ENCODE measurements at regions of chr14 and their contacts with region 1.

Region 1: GRCh38 chr14:64503478-64504309 is at the start of gene ZBTB25:
- DNase-seq: peak; percentile 93
- ATAC-seq: peak; percentile 75
- H3K4me3 ChIP-seq: peak within 1 kb of the TSS; percentile 87
- H3K27ac ChIP-seq: peak within 1 kb of the TSS; percentile 100
- H3K4me1 ChIP-seq: peaks cover 14% of the 10 kb centered on the region
- H3K27me3 ChIP-seq: no peaks in the 10 kb centered on the region
- CTCF ChIP-seq: no peak
- POLR2A ChIP-seq: peak; percentile 72
- RAD21 ChIP-seq: no peak
- total RNA-seq, gene ZBTB25: 4.2 and 6.6 TPM in 2 replicates

Region 2: GRCh38 chr14:64636208-64636979 is 132.7 kb after region 1 on chr14:
- CTCF ChIA-PET with region 1: interaction called, 3 read pairs
- POLR2A ChIA-PET with region 1: interaction called, 9 read pairs
- dilution Hi-C with region 1: no loop called
- in situ Hi-C with region 1: no loop called
- intact Hi-C with region 1: loop called (anchors 2 kb)
- DNase-seq: peak; percentile 67
- ATAC-seq: peak; percentile 89
- H3K4me3 ChIP-seq: no peak overlapping the region
- H3K27ac ChIP-seq: peak overlapping the region; percentile 48
- H3K4me1 ChIP-seq: peaks cover 12% of the 10 kb centered on the region
- H3K27me3 ChIP-seq: no peaks in the 10 kb centered on the region
- CTCF ChIP-seq: peak; percentile 86
- POLR2A ChIP-seq: no peak
- RAD21 ChIP-seq: peak; percentile 84

Region 3: GRCh38 chr14:64764641-64765520 is 261.2 kb after region 1 on chr14:
- CTCF ChIA-PET with region 1: no interaction called
- POLR2A ChIA-PET with region 1: no interaction called
- dilution Hi-C with region 1: no loop called
- in situ Hi-C with region 1: no loop called
- intact Hi-C with region 1: loop called (anchors 2 kb)
- DNase-seq: peak; percentile 74
- ATAC-seq: peak; percentile 84
- H3K4me3 ChIP-seq: no peak overlapping the region
- H3K27ac ChIP-seq: no peak overlapping the region
- H3K4me1 ChIP-seq: peaks cover 30% of the 10 kb centered on the region
- H3K27me3 ChIP-seq: peaks cover 12% of the 10 kb centered on the region
- CTCF ChIP-seq: peak; percentile 88
- POLR2A ChIP-seq: no peak
- RAD21 ChIP-seq: peak; percentile 89